ENCODE measurements at regions of chr7 and their contacts with region 1.

Region 1: GRCh38 chr7:98569691-98570337 is 47.3 kb upstream of the NPTX2 start:
- DNase-seq: peak in 1 of 2 donors; percentile 27
- ATAC-seq: peak in 7 of 8 donors; percentile 24 to 83 (median 61)
- H3K4me3 ChIP-seq: no peak overlapping the region
- H3K27ac ChIP-seq: peak overlapping the region in 2 of 10 donors; percentile 40 to 55
- H3K4me1 ChIP-seq: no peaks in the 10 kb centered on the region
- H3K27me3 ChIP-seq: peaks cover 0 to 27% (median 0%) of the 10 kb centered on the region in 7 donors
- CTCF ChIP-seq: no peak

Region 2: DNA sequence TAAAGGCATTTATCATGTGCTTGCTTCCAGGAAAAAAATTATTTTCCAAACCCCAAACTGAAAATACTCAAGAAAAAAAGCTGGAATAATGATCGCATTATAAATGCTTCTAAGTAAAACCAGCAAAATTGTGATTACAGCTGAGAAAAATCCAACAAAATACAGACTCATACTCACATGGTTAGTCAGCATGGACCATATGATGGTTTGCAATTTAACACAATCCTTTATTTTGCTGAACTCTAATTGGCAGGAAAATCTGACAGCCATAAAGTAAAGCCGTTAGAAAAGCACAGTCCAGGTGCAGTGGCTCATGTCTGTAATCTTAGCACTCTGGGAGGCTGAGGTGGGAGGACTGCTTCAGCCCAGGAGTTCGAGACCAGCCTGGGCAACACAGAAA is 228.7 kb before region 1 on chr7:
- intact Hi-C with region 1: no loop called
- DNase-seq: no peak
- ATAC-seq: no peak
- H3K4me3 ChIP-seq: no peak overlapping the region
- H3K27ac ChIP-seq: no peak overlapping the region
- H3K4me1 ChIP-seq: no peaks in the 10 kb centered on the region
- H3K27me3 ChIP-seq: no peaks in the 10 kb centered on the region
- CTCF ChIP-seq: no peak

Region 3: DNA sequence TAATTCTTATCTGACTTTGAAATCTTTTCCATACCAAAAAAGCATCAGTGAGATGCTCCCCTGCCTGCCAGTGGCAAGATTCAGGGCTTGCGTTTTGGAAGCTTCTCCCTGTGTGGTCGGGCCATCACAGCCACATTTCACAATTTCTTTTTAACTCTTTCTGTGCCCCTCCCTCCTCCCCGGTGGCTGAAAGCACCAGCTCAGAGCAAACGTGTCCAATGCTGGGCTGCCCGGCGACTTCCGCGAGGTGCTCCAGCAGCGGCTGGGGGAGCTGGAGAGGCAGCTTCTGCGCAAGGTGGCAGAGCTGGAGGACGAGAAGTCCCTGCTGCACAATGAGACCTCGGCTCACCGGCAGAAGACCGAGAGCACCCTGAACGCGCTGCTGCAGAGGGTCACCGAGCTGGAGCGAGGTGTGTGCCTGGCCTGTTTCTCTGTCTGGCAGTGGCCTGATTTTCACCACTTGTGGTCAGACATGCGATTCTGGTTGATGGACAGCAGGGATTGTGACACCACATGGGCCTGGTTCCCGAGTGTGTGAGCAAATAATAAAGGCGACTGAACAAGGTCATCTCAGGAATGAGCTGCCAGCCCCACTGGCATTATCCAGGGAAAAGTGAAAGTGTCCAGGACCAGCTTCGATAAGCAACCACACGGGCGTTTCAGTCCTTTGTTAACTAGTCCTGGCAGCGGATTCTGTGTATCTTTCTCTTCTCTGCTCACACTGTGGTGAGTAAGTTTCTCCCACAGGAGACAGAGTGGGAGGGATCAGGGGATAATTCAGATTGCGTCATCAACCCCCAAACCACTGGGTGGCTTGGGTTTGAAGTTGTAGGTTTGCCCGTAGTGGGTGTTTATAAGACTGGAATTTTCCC is 49.9 kb after region 1 on chr7:
- intact Hi-C with region 1: loop called in 1 of 10 experiments (anchors 10 kb)
- DNase-seq: peak in 1 of 2 donors; percentile 40
- ATAC-seq: peak in 7 of 8 donors; percentile 58 to 92 (median 78)
- H3K4me3 ChIP-seq: peak overlapping the region in 4 of 10 donors; percentile 0 to 13 (median 8)
- H3K27ac ChIP-seq: no peak overlapping the region
- H3K4me1 ChIP-seq: peaks cover 0 to 17% (median 13%) of the 10 kb centered on the region in 9 donors
- H3K27me3 ChIP-seq: peaks cover 6 to 87% (median 52%) of the 10 kb centered on the region in 7 donors
- CTCF ChIP-seq: no peak

Region 4: DNA sequence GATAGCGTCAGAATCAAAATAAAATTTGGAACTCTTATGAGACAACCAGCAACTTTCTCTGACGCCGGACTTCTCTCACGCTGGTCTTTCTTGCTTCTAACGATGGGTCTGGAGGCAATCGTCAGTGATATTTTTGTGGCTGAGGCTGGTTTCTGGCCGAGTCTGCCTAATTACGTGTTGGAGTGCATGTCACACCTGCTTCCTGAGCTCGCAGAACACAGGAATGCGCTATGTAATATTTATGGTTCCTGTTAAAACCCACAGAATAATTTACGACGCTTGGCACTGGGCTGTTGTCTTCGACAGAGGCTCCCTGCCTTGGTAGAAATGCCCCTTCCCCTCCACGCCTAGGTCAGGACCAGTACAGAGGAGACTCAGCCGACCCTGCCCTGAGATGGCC is 112.1 kb after region 1 on chr7:
- intact Hi-C with region 1: no loop called
- DNase-seq: no peak
- ATAC-seq: no peak
- H3K4me3 ChIP-seq: no peak overlapping the region
- H3K27ac ChIP-seq: no peak overlapping the region
- H3K4me1 ChIP-seq: no peaks in the 10 kb centered on the region
- H3K27me3 ChIP-seq: peaks cover 0 to 7% (median 5%) of the 10 kb centered on the region in 7 donors
- CTCF ChIP-seq: no peak

Measured in heart right ventricle (tissue), 16 donors.